ENCODE measurements at regions of chr19 and their contacts with region 1.

Region 1: DNA sequence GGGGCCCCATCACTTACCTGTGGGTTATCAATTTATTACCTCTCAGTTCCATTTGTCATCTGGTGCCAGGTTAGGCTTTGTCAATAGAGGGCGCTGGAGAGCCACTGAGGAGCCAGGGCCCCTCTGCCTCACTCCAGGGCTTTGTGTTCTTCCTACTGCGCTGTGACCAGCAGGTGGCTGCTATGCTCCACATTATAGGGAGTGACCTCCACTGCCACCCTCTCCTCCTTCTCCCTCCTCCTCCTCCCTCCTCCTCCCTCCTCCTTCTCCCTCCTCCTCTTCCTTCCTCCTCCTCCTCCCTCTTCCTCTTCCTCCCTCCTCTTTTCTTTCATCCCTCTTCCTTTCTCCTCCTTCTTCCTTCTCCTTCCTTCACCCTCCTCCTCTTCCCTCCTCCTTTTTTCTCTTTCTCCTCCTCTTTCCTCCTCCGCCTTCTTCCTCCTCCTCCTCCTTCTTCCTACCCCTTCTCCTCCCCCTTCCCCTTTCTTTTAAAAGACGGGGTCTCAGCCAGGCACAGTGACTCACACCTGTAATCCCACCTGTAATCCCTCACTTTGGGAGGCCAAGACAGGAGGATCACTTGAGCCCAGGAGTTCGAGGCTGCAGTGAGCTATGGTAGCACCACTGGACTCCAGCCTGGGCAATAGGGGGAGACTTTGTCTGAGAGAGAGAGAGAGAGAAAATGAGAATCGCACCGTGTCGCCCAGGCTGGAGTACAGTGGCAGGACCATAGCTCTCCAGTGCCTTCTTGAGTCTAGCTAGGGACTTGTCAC is 10.3 kb upstream of the ZBTB32 start:
- DNase-seq: peak; percentile 81 to 92 (median 84)
- H3K4me3 ChIP-seq: no peak overlapping the region
- H3K4me3 Mint-ChIP-seq: no peak overlapping the region
- H3K27ac ChIP-seq: no peak overlapping the region
- H3K27ac Mint-ChIP-seq: peak overlapping the region in 2 of 8 donors; percentile 23 to 51
- H3K4me1 ChIP-seq: no peaks in the 10 kb centered on the region
- H3K4me1 Mint-ChIP-seq: no peaks in the 10 kb centered on the region
- H3K27me3 ChIP-seq: no peaks in the 10 kb centered on the region
- H3K27me3 Mint-ChIP-seq: peaks cover 0 to 1% of the 10 kb centered on the region in 2 donors

Region 2: DNA sequence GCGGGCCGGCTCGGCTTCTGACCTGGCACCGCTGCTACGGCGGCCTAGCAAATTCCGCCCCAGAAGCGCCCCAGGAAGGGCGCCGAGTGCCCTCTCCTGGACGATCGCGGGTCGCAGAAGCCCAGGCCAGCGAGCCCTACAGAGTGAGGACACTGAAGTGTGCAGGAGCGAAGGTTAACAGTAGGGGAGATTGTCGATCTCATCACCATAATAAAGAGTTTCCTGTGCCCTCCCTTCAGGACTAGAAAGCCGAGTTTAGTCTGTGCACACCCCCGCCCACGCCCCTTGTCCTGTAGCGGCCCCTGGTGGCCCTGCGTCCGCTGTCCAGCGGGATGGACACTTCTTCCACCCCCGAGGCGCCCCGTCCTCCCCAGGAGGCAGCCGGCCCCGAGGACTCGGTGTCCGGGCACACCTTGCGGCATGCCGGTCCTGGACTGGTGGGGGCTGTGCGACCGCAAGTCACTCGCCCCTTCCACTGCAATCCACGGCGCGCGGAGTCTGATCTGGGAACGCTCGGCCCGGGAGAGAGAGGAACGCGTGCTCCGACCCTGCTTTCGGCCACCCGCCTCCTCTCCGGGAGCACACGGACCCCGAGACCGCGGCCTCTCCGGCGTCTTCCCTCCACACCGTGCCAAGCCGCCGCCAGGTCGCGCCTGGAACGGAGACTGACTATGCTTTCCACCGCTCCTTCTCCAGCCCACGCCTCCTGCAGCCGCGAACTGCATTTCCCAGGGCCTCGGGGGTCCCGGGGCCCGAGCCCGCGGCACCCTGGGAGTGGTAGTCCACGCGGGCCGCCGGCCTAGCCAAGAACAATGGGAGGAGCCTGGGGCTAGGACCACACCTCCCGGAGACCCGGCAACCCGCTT is 23.0 kb after region 1 on chr19:
- CTCF ChIA-PET with region 1: interaction called, 20 read pairs
- POLR2A ChIA-PET with region 1: no interaction called
- DNase-seq: peak; percentile 95 to 98 (median 98)
- H3K4me3 ChIP-seq: peak overlapping the region; percentile 89
- H3K4me3 Mint-ChIP-seq: peak overlapping the region; percentile 86 to 98 (median 91)
- H3K27ac ChIP-seq: peak overlapping the region; percentile 72
- H3K27ac Mint-ChIP-seq: peak overlapping the region; percentile 83 to 98 (median 94)
- H3K4me1 ChIP-seq: peaks cover 61% of the 10 kb centered on the region
- H3K4me1 Mint-ChIP-seq: peaks cover 50 to 72% (median 58%) of the 10 kb centered on the region in 3 donors
- H3K27me3 ChIP-seq: no peaks in the 10 kb centered on the region
- H3K27me3 Mint-ChIP-seq: peaks cover 0 to 4% of the 10 kb centered on the region in 2 donors

Measured in CD8-positive, alpha-beta memory T cell (primary cell).